Mammary epithelial cell (primary cell): ENCODE measurements at regions of chr2 and their contacts with region 1.

Region 1: GRCh38 chr2:112626604-112627059 is 19.1 kb upstream of the SLC20A1 start:
- DNase-seq: no peak
- H3K4me3 ChIP-seq: peak overlapping the region in 2 of 3 experiments; percentile 28 to 33
- H3K27ac ChIP-seq: peak overlapping the region; percentile 98
- H3K4me1 ChIP-seq: peaks cover 93% of the 10 kb centered on the region
- H3K27me3 ChIP-seq: no peaks in the 10 kb centered on the region
- CTCF ChIP-seq: peak; percentile 78 to 95

Region 2: GRCh38 chr2:112584134-112584890 is 42.3 kb before region 1 on chr2 and contains the start of gene CHCHD5:
- CTCF ChIA-PET with region 1: no interaction called
- dilution Hi-C with region 1: no loop called
- in situ Hi-C with region 1: no loop called
- intact Hi-C with region 1: loop called (anchors 1 kb)
- DNase-seq: peak; percentile 97
- H3K4me3 ChIP-seq: peak within 1 kb of the TSS; percentile 67 to 85 (median 72)
- H3K27ac ChIP-seq: peak within 1 kb of the TSS; percentile 98
- H3K4me1 ChIP-seq: peaks cover 21% of the 10 kb centered on the region
- H3K27me3 ChIP-seq: no peaks in the 10 kb centered on the region
- CTCF ChIP-seq: peak in 1 of 2 donors; percentile 16
- total RNA-seq, gene CHCHD5: 10.2 to 42.6 TPM

Region 3: DNA sequence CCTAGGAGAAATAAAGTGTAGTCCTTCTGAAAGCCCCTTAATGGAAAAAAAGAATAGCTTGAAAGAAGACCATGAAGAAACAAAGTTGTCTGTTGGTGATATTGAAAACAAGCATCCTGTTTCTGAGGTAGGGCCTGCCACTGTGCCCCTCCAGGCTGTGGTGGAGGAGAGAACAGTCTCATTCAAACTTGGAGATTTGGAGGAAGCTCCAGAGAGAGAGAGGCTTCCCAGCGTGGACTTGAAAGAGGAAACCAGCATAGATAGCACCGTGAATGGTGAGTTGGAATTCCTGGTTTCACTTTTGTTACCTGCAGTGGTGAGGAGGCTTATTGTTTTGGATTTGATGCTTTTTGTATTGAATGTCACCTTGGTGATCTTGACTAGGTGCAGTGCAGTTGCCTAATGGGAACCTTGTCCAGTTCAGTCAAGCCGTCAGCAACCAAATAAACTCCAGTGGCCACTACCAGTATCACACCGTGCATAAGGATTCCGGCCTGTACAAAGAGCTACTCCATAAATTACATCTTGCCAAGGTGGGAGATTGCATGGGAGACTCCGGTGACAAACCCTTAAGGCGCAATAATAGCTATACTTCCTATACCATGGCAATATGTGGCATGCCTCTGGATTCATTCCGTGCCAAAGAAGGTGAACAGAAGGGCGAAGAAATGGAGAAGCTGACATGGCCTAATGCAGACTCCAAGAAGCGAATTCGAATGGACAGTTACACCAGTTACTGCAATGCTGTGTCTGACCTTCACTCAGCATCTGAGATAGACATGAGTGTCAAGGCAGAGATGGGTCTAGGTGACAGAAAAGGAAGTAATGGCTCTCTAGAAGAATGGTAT is 32.4 kb after region 1 on chr2:
- CTCF ChIA-PET with region 1: interaction called, 17 read pairs
- dilution Hi-C with region 1: no loop called
- in situ Hi-C with region 1: no loop called
- intact Hi-C with region 1: loop called (anchors 5 kb)
- DNase-seq: peak; percentile 48
- H3K4me3 ChIP-seq: no peak overlapping the region
- H3K27ac ChIP-seq: peak overlapping the region; percentile 61
- H3K4me1 ChIP-seq: peaks cover 26% of the 10 kb centered on the region
- H3K27me3 ChIP-seq: no peaks in the 10 kb centered on the region
- CTCF ChIP-seq: peak in 1 of 2 donors; percentile 25

Region 4: GRCh38 chr2:112884869-112885505 is 258.4 kb after region 1 on chr2:
- CTCF ChIA-PET with region 1: no interaction called
- dilution Hi-C with region 1: no loop called
- in situ Hi-C with region 1: no loop called
- intact Hi-C with region 1: loop called (anchors 1 kb)
- DNase-seq: peak; percentile 44
- H3K4me3 ChIP-seq: no peak overlapping the region
- H3K27ac ChIP-seq: no peak overlapping the region
- H3K4me1 ChIP-seq: peaks cover 43% of the 10 kb centered on the region
- H3K27me3 ChIP-seq: no peaks in the 10 kb centered on the region
- CTCF ChIP-seq: peak; percentile 79 to 93